Heart left ventricle (tissue), 16 donors: ENCODE measurements at regions of chr12 and their contacts with region 1.

Region 1: GRCh38 chr12:59619461-59620240 is 23.8 kb downstream of the SLC16A7 start:
- DNase-seq: no peak
- ATAC-seq: peak in 1 of 4 donors; percentile 24
- H3K4me3 ChIP-seq: no peak overlapping the region
- H3K27ac ChIP-seq: peak overlapping the region in 11 of 12 donors; percentile 8 to 82 (median 53)
- H3K4me1 ChIP-seq: peaks cover 0 to 44% (median 17%) of the 10 kb centered on the region in 12 donors
- H3K27me3 ChIP-seq: no peaks in the 10 kb centered on the region
- CTCF ChIP-seq: no peak
- POLR2A ChIP-seq: no peak

Region 2: GRCh38 chr12:59472273-59472672 is 147.4 kb before region 1 on chr12:
- intact Hi-C with region 1: no loop called
- DNase-seq: no peak
- ATAC-seq: no peak
- H3K4me3 ChIP-seq: no peak overlapping the region
- H3K27ac ChIP-seq: no peak overlapping the region
- H3K4me1 ChIP-seq: no peaks in the 10 kb centered on the region
- H3K27me3 ChIP-seq: no peaks in the 10 kb centered on the region
- CTCF ChIP-seq: no peak
- POLR2A ChIP-seq: no peak

Region 3: DNA sequence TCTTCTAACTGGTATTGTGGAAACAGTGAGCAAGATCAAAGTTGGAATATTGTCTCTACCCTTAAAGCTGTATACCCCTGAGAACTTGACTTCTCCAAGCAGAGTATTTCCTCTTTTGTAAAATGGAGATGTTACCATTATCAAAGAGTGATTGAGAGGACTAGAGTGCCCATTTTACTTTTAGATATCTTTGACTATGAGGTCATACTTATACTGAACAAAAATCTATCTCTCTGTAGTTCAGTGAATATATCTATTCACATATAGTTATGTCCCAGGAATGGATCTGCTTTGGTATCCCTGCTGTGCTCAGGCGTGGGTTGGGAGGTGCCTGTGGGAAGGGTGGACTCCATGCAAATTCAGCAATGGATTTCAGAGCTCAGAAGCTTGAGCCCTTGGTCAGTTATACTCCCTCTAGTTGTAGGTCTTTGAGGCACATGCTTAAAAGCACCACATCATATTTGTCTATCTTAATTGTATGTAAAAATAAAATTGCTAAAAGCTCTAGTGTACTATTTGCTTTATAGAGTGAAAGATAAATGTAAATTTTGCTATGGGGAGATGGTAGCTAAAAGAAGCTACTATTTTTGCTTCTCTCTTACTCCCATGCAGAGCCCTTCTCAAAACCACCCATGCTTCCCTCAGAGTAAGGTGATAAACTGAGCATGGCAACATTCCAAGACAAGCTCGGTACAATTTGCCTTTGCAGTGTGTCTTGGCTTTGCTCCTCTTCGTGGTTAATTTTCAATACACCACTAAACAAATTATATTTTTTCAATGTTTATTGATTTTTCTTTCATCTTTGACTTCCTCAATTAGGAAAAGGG is 31.0 kb after region 1 on chr12:
- intact Hi-C with region 1: loop called in 1 of 10 experiments (anchors 5 kb)
- DNase-seq: no peak
- ATAC-seq: peak; percentile 64 to 71 (median 68)
- H3K4me3 ChIP-seq: no peak overlapping the region
- H3K27ac ChIP-seq: peak overlapping the region in 11 of 12 donors; percentile 3 to 68 (median 55)
- H3K4me1 ChIP-seq: peaks cover 0 to 22% (median 3%) of the 10 kb centered on the region in 12 donors
- H3K27me3 ChIP-seq: no peaks in the 10 kb centered on the region
- CTCF ChIP-seq: peak in 3 of 12 donors; percentile 7 to 33 (median 26)
- POLR2A ChIP-seq: no peak

Region 4: DNA sequence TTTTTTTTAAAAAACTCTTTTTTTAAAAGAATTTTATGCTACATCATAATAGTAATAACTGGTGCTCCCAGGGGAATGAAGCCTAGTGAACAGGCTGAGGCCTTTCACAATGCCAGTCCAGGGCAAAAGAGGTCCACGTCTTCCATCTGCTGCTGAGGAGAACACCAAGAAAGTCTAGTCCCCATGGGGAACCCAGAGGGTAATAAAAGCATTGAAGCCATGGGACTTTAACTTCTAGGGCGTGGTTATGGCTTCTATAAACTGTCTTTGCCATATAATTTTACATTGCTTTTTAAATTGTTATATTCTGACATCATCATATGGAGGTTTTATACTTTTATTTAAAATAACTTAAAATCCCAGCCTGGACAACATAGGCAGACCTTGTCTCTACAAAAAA is 40.5 kb after region 1 on chr12:
- intact Hi-C with region 1: loop called in 3 of 10 experiments (anchors 5 to 10 kb)
- DNase-seq: no peak
- ATAC-seq: no peak
- H3K4me3 ChIP-seq: no peak overlapping the region
- H3K27ac ChIP-seq: no peak overlapping the region
- H3K4me1 ChIP-seq: peaks cover 0 to 13% (median 0%) of the 10 kb centered on the region in 12 donors
- H3K27me3 ChIP-seq: no peaks in the 10 kb centered on the region
- CTCF ChIP-seq: no peak
- POLR2A ChIP-seq: no peak